Activated CD4-positive, alpha-beta T cell treated with anti-CD3 and anti-CD28 coated beads, Interleukin-2, amount 10 ng/mL, durations not matched to agents 24 days and 14 days (primary cell): ENCODE measurements at regions of chr12 and their contacts with region 1.

Region 1: DNA sequence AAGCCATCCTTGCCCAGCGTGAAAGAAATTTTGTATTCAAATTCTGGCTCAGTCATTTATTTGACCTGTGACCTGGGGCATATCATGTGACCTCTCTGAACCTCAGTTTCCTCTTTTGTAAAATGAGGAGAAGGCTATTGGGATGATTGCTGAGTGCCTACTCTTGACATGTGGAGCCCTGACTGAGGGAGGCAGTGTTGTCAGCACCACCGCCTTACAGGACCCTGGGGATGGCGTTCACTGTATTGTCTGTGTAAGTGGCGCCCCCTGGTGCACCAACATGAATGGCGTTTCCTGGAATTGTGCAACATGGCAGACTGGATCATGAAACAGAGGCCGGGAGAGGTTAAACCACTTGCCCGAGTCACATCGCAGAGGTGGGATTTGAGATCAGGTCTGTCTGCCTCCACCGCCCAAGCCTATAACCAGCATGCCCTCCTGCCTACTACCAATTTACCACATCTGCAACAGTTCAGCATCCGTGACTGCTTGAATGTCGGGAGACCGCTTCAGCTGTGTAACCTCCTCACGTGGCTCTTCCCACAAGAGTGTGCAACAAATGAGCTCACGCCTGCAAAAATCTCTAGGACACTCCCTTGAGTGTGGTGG is 20.1 kb upstream of the CCDC63 start:
- DNase-seq: peak; percentile 96
- H3K4me3 Mint-ChIP-seq: peak overlapping the region; percentile 43
- H3K27ac Mint-ChIP-seq: peak overlapping the region; percentile 46
- H3K4me1 Mint-ChIP-seq: peaks cover 16% of the 10 kb centered on the region
- H3K27me3 Mint-ChIP-seq: peaks cover 10% of the 10 kb centered on the region

Region 2: DNA sequence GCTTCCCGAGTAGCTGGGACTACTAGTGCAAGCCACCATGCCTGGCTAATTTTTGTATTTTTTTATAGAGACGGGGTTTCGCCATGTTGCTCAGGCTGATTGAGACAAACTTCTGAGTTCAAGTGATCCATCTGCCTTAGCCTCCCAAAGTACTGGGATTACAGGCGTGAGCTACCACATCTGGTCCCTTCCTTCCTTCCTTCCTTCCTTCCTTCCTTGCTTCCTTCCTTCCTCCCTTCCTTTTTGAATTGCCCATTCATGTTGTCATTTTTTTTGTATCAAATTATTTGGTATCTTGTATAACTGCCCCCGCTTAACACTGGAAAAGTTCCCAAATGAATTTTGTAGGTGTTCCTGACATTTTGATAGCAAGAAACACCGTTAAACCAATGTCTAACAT is 312.9 kb before region 1 on chr12:
- intact Hi-C with region 1: loop called (anchors 2 kb)
- DNase-seq: no peak
- H3K4me3 Mint-ChIP-seq: no peak overlapping the region
- H3K27ac Mint-ChIP-seq: no peak overlapping the region
- H3K4me1 Mint-ChIP-seq: peaks cover 1% of the 10 kb centered on the region
- H3K27me3 Mint-ChIP-seq: peaks cover 13% of the 10 kb centered on the region

Region 3: GRCh38 chr12:110704748-110705147 is 121.9 kb before region 1 on chr12:
- intact Hi-C with region 1: loop called (anchors 1 kb)
- DNase-seq: peak; percentile 75
- H3K4me3 Mint-ChIP-seq: no peak overlapping the region
- H3K27ac Mint-ChIP-seq: no peak overlapping the region
- H3K4me1 Mint-ChIP-seq: no peaks in the 10 kb centered on the region
- H3K27me3 Mint-ChIP-seq: no peaks in the 10 kb centered on the region

Region 4: DNA sequence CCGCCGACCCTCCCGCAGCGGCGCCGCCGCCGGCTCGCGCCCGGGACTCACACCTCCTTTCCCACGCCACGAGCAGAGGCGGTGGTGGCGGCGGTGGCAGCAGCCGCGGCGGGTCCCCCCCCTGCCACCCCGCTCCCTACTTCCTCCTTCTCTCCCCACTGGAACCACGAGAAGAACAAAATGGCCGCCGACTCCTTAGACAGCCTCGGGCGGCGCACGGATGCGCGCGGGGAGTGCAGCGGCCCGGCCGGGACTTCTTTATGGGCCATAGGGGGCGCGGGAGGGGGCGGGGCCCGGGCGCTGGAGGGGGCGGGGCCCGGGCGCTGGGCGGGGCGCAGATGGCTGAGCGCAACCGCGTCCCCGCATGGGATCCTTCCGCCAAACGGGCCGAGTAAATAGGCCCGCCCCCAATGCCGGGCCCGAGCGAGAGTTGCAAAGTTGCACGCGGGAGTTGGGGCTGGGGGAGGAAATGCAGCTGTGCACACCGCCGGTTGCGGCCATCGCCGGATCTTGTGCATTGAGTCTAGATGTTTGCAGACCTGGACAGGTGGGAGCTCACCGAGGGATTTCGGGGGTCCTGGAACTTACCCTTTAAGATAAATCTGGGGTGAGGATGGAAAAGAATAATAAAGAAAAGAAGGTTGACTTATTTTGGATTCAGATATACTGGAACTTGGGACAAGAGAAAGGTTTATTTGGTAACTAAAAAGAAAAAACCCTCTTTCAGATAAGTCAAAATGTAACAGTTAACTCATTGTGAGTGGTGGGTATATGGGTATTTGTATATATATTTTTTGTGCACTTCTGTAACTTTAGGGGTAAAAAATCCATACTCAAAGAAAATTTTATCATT is 83.8 kb before region 1 on chr12 and contains the start of gene PPP1CC:
- intact Hi-C with region 1: loop called (anchors 1 kb)
- DNase-seq: peak; percentile 97
- H3K4me3 Mint-ChIP-seq: peak within 1 kb of the TSS; percentile 99
- H3K27ac Mint-ChIP-seq: peak within 1 kb of the TSS; percentile 99
- H3K4me1 Mint-ChIP-seq: peaks cover 35% of the 10 kb centered on the region
- H3K27me3 Mint-ChIP-seq: no peaks in the 10 kb centered on the region
- total RNA-seq, gene PPP1CC: 459 and 489 TPM in 2 replicates

Region 5: GRCh38 chr12:110794623-110795280 is 31.9 kb before region 1 on chr12:
- intact Hi-C with region 1: loop called (anchors 2 kb)
- DNase-seq: no peak
- H3K4me3 Mint-ChIP-seq: no peak overlapping the region
- H3K27ac Mint-ChIP-seq: no peak overlapping the region
- H3K4me1 Mint-ChIP-seq: peaks cover 21% of the 10 kb centered on the region
- H3K27me3 Mint-ChIP-seq: no peaks in the 10 kb centered on the region

Region 6: DNA sequence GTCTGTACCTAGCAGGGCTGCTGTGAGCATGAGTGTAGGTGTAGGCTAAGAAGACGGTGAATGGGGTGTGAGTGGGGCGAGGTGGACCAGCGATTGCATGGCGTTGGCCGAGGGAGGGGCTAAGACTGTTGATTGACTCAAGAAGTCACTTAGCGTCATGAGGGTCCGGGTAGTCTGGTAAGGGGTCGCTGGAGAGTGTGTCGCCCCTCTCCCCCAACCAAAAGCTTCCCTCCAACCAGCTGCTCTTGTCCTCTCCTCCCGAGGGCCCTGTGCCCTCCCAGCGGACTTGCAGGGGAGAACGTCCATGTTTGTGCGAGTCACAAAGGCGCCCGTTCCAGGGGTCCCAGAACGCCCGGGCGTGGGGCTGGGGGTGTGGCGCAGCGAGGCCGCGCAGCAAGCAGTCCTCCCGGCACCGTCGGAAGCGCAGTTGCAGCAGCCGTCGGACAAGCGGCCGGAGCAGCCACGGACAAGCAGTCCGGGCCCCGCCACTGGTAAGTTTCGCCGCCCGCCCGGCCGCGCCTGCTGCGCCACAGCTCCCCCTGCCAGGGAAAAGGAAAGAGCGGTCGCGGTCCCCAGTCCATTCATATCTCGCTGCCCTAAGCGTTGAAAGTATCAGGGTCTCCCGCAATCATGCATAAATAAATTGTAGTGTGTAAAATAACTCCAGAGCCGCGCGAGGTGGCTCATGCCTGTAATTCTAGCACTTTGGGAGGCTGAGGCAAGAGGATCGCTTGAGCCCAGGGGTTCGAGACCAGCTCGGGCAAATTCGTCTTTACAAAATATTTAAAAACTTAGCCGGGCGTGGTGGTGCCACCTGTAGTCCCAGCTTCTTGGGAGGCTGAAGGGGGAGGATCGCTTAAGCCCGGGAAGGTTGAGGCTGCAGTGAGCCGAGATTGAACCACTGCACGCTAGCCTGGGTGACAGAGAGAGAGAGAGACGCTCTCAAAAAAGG is 20.2 kb after region 1 on chr12 and contains the start of gene CCDC63:
- intact Hi-C with region 1: no loop called
- DNase-seq: peak; percentile 73
- H3K4me3 Mint-ChIP-seq: peak within 1 kb of the TSS; percentile 78
- H3K27ac Mint-ChIP-seq: no peak within 1 kb of the TSS
- H3K4me1 Mint-ChIP-seq: peaks cover 8% of the 10 kb centered on the region
- H3K27me3 Mint-ChIP-seq: peaks cover 52% of the 10 kb centered on the region
- total RNA-seq, gene CCDC63: not detected in 2 replicates